ENCODE measurements at regions of chr14 and their contacts with region 1.

Region 1: DNA sequence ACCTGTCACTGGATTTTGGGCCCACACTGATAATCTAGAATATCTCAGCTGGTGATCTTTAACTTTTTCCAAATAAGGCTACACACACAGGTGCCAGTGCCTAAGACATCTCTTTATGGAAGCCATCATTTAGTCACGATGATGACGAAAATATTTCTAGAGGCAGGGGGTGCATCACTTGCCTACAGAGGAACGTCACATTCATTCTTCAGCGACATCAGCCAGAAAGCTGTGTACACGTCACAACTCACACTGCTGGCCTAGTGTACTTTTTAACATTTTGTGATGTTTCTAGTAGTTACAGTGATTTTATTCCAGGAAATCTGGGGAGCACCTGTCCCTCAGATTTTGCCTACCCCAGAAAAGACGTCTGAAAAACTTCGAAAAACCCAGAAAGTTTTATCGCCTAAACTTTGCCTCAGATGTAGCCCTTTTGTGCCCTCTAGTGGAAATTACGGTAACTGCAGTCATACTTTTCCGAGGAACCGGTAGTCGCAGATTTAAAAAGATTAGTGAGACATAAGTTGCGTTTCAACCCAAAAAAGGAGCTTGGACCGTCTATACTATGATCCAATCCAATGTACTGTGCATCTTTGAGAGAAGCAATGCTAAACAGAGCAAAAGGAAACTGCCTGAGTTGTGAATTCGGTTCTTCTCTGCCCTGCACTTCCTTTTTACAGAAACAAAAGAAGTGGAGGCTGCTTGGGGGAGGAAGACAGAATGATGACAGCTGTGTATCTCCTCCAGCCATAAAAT is 64.3 kb upstream of the STON2 start:
- DNase-seq: peak; percentile 15 to 86 (median 75)
- ATAC-seq: peak; percentile 90
- H3K4me3 ChIP-seq: peak overlapping the region; percentile 85
- H3K4me3 Mint-ChIP-seq: peak overlapping the region; percentile 76 to 91 (median 88)
- H3K27ac ChIP-seq: peak overlapping the region; percentile 76
- H3K27ac Mint-ChIP-seq: peak overlapping the region; percentile 70 to 98 (median 91)
- H3K4me1 ChIP-seq: no peaks in the 10 kb centered on the region
- H3K4me1 Mint-ChIP-seq: peaks cover 0 to 14% (median 8%) of the 10 kb centered on the region in 7 donors
- H3K27me3 ChIP-seq: no peaks in the 10 kb centered on the region
- H3K27me3 Mint-ChIP-seq: no peaks in the 10 kb centered on the region

Region 2: GRCh38 chr14:81269100-81269978 is 195.1 kb before region 1 on chr14:
- CTCF ChIA-PET with region 1: interaction called, 35 read pairs
- POLR2A ChIA-PET with region 1: no interaction called
- intact Hi-C with region 1: loop called (anchors 1 kb)
- DNase-seq: peak in 7 of 9 donors; percentile 14 to 45 (median 27)
- ATAC-seq: peak; percentile 82
- H3K4me3 ChIP-seq: no peak overlapping the region
- H3K4me3 Mint-ChIP-seq: no peak overlapping the region
- H3K27ac ChIP-seq: no peak overlapping the region
- H3K27ac Mint-ChIP-seq: no peak overlapping the region
- H3K4me1 ChIP-seq: no peaks in the 10 kb centered on the region
- H3K4me1 Mint-ChIP-seq: peaks cover 0 to 21% (median 6%) of the 10 kb centered on the region in 7 donors
- H3K27me3 ChIP-seq: no peaks in the 10 kb centered on the region
- H3K27me3 Mint-ChIP-seq: peaks cover 12 to 26% (median 17%) of the 10 kb centered on the region in 5 donors

Region 3: DNA sequence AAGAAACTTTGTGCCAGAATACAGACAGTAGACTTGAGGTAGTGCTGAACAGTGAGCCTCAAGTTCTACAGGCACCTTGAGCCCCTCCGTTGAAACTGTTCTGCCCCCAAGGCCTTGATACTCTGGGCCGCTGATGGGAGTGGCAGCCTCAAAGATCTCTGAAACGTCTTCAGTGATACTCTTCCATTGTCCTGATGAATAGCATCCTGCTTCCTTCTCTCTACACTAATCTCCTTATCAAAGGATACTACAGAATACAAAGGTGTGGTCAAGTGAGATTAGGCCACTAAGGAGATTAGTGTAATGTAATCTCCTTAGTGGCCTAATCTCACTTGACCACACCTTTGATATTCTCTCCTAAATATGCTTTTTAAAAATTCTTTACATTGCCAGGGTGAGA is 489.0 kb after region 1 on chr14:
- CTCF ChIA-PET with region 1: no interaction called
- POLR2A ChIA-PET with region 1: no interaction called
- intact Hi-C with region 1: no loop called
- DNase-seq: no peak
- ATAC-seq: no peak
- H3K4me3 ChIP-seq: no peak overlapping the region
- H3K4me3 Mint-ChIP-seq: no peak overlapping the region
- H3K27ac ChIP-seq: no peak overlapping the region
- H3K27ac Mint-ChIP-seq: no peak overlapping the region
- H3K4me1 ChIP-seq: no peaks in the 10 kb centered on the region
- H3K4me1 Mint-ChIP-seq: no peaks in the 10 kb centered on the region
- H3K27me3 ChIP-seq: no peaks in the 10 kb centered on the region
- H3K27me3 Mint-ChIP-seq: no peaks in the 10 kb centered on the region